Activated CD8-positive, alpha-beta T cell treated with anti-CD3 and anti-CD28 coated beads, Interleukin-2, amount 10 ng/mL, durations not matched to agents 7 days and 5 days (primary cell): ENCODE measurements at regions of chr5 and their contacts with region 1.

Region 1: DNA sequence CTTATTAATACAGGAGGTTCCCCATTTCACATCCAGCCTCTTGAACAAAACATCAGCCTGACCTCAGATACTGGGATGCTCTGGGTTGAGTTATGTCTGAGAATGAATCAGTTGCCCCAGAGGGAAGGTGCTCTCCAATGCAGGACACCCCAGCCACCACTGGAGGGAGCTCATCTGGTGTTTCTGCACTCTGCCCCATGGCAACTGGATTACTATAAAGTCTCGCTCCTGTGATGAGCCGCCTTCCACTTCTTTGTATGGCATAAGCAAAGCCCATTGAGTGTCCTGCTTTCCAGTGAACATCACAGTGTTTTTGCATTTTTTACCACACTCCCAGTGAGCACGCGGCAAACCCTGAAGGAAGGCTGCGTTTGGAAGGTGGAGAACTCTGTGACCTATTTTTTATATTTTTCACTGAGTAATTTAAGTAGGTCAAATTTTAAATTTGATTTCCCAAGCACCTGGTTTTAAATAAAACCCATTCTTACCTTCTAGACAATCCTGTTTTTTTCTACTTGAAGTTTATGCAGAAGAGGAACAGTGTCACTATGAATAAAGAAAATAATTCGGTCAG is 176.9 kb upstream of the WWC1 start:
- DNase-seq: peak; percentile 47
- ATAC-seq: no peak
- H3K4me3 Mint-ChIP-seq: no peak overlapping the region
- H3K27ac Mint-ChIP-seq: no peak overlapping the region
- H3K4me1 Mint-ChIP-seq: no peaks in the 10 kb centered on the region
- H3K27me3 Mint-ChIP-seq: no peaks in the 10 kb centered on the region

Region 2: DNA sequence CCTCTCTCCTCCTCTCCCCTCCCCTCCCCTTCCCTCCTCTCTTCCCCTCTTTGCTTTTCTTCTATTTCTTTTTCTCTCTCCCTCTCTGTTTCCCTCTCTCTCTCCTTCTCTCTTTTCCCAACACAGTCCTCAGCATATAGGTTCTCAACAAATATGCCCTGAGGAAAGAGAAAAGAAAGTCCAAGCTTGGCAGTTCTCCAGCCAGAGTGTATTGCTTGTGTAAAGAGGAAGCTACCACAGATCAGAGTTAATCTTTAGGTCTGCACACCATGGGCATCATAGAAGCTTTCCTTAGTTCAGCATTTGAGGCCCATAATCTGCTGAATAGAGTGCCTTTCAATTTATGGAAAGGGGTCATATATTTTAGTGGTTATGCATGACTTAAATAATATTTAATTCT is 205.9 kb before region 1 on chr5:
- CTCF ChIA-PET with region 1: no interaction called
- POLR2A ChIA-PET with region 1: no interaction called
- DNase-seq: no peak
- ATAC-seq: no peak
- H3K4me3 Mint-ChIP-seq: no peak overlapping the region
- H3K27ac Mint-ChIP-seq: no peak overlapping the region
- H3K4me1 Mint-ChIP-seq: no peaks in the 10 kb centered on the region
- H3K27me3 Mint-ChIP-seq: no peaks in the 10 kb centered on the region

Region 3: GRCh38 chr5:168135897-168136296 is 21.4 kb after region 1 on chr5:
- CTCF ChIA-PET with region 1: no interaction called
- POLR2A ChIA-PET with region 1: no interaction called
- DNase-seq: no peak
- ATAC-seq: no peak
- H3K4me3 Mint-ChIP-seq: no peak overlapping the region
- H3K27ac Mint-ChIP-seq: no peak overlapping the region
- H3K4me1 Mint-ChIP-seq: no peaks in the 10 kb centered on the region
- H3K27me3 Mint-ChIP-seq: no peaks in the 10 kb centered on the region

Region 4: GRCh38 chr5:168219515-168220410 is 105.2 kb after region 1 on chr5:
- CTCF ChIA-PET with region 1: interaction called, 11 read pairs
- POLR2A ChIA-PET with region 1: no interaction called
- DNase-seq: peak; percentile 64
- ATAC-seq: peak; percentile 63
- H3K4me3 Mint-ChIP-seq: no peak overlapping the region
- H3K27ac Mint-ChIP-seq: no peak overlapping the region
- H3K4me1 Mint-ChIP-seq: no peaks in the 10 kb centered on the region
- H3K27me3 Mint-ChIP-seq: no peaks in the 10 kb centered on the region